A549 (cell line): ENCODE measurements at regions of chr17 and their contacts with region 1.

Region 1: DNA sequence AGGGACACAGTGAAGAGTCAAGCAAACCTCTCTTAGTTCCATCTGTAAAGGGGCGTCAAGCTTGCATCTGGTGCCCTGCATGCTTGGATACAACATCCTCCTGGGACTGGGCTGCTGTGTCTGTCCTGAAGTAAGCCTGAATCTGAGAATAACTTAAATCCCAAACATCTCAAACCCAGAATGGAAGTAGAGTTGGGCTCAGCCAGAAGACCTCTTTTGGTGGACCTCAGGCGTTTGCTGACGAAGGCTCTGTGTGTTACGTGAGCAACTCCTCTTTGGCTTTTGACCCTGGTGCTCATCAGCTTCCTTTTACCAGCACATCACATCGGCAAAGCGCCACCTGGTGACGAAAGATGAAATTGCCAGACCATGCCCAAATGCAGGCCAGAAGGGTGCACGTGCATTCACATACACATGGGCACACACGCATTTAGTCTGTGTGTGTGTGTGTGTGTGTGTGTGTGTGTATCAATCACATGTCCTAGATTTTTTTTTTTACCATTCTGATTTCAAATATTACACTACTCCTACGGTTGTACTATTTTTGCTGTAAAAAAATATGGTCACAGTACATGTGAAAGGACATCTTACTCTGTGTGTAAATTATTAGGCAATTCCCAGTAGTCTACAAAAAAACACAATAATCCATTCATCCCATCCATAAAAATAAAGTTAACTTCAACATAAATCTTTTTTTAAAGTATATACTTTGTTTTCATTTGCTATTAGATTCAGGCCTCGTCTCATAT is 41.1 kb upstream of the FOXJ1 start:
- DNase-seq: peak; percentile 96 to 97
- ATAC-seq: peak; percentile 94 to 97
- H3K4me3 ChIP-seq: no peak overlapping the region
- H3K27ac ChIP-seq: peak overlapping the region in 1 of 2 experiments; percentile 29; a peak in 1 of 6 replicates
- H3K4me1 ChIP-seq: no peaks in the 10 kb centered on the region
- CTCF ChIP-seq: peak; percentile 93
- EP300 ChIP-seq: no peak
- POLR2A ChIP-seq: no peak
- RAD21 ChIP-seq: peak; percentile 74

Region 2: DNA sequence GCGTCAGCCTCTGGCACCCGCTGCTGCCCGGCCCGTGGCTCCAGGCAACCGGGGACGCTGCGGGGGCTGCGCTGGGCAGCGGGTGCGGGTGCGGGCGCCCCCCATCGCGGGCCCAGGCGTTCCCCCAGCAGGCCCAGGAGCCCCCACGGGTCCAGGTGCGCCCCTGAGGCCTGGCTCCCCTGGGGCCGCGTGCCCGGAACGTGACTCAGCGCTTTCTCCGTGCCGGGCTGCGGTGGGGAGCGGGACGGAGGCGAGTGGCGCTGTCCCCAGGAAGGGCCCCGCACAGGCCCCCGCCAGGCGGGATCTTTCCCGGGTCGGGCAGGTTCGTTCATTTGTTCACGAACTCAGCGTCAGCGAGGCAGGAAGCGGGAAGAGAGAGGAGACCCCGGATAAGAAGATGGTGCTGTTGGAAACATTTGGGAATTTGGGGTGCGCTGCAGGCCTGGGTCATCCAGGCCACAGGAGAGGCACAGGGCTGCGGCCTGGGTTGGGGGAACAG is 60.2 kb before region 1 on chr17:
- CTCF ChIA-PET with region 1: interaction called, 206 read pairs
- POLR2A ChIA-PET with region 1: interaction called, 3 read pairs
- DNase-seq: no peak
- ATAC-seq: peak in 1 of 2 experiments; percentile 3; a peak in 2 of 6 replicates
- H3K4me3 ChIP-seq: peak overlapping the region; percentile 2; the same call in 1 of the 3 replicates
- H3K27ac ChIP-seq: peak overlapping the region; percentile 68 to 90
- H3K4me1 ChIP-seq: peaks cover 5% of the 10 kb centered on the region
- CTCF ChIP-seq: no peak
- EP300 ChIP-seq: no peak
- POLR2A ChIP-seq: no peak
- RAD21 ChIP-seq: no peak

Region 3: GRCh38 chr17:76153640-76154039 is 28.6 kb before region 1 on chr17:
- CTCF ChIA-PET with region 1: interaction called, 41 read pairs
- POLR2A ChIA-PET with region 1: no interaction called
- DNase-seq: no peak
- ATAC-seq: peak in 1 of 2 experiments; percentile 48; a peak in 3 of 6 replicates
- H3K4me3 ChIP-seq: no peak overlapping the region
- H3K27ac ChIP-seq: no peak overlapping the region
- H3K4me1 ChIP-seq: 0 out of 3 replicates have a peak, but pooled peaks cover 2% of the 10 kb centered on the region
- CTCF ChIP-seq: no peak
- EP300 ChIP-seq: no peak
- POLR2A ChIP-seq: no peak
- RAD21 ChIP-seq: no peak

Region 4: DNA sequence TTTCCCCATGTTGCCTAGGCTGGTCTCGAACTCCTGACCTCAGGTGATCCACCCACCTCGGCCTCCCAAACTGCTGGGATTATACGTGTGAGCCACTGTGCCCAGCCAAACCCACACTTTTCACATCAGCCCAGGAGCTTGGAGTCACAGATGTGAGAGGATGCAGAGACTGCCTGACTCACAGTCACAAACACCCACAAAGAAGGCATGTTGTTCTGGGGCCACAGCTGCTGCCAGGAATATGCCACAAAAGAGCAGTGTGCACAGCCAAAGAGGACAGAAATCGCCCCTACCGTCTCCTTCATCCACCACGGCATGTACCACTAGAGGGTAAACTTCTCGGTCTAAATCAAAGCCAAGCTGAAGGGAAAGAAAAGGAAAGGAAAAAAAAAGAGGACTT is 16.0 kb before region 1 on chr17:
- CTCF ChIA-PET with region 1: interaction called, 90 read pairs
- POLR2A ChIA-PET with region 1: no interaction called
- DNase-seq: no peak
- ATAC-seq: no peak
- H3K4me3 ChIP-seq: no peak overlapping the region
- H3K27ac ChIP-seq: no peak overlapping the region
- H3K4me1 ChIP-seq: no peaks in the 10 kb centered on the region
- CTCF ChIP-seq: no peak
- EP300 ChIP-seq: no peak
- POLR2A ChIP-seq: no peak
- RAD21 ChIP-seq: no peak

Region 5: DNA sequence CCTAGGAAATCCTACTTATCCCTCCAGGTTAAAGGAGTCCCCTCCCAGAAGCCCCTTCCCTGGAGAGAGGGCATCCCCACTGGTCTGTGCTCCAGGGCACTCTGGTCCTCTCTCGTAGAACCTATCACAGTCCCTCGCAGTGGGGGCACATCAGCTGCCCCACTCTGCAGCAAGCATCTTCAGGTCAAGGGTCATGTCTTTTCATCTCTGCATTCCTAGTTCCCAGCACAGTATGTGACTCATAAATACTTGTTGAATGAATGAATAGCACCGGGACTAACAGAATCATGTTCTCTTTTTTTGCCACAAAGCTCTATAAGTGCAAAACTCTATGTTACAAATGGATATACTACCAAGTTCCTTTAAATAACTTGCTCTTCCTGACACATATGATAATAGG is 22.1 kb after region 1 on chr17:
- CTCF ChIA-PET with region 1: interaction called, 16 read pairs
- POLR2A ChIA-PET with region 1: no interaction called
- DNase-seq: peak; percentile 36 to 75
- ATAC-seq: peak; percentile 91
- H3K4me3 ChIP-seq: no peak overlapping the region
- H3K27ac ChIP-seq: peak overlapping the region; percentile 3 to 72; a peak in 3 of 6 replicates
- H3K4me1 ChIP-seq: peaks cover 17% of the 10 kb centered on the region
- CTCF ChIP-seq: no peak
- EP300 ChIP-seq: no peak
- POLR2A ChIP-seq: no peak
- RAD21 ChIP-seq: no peak

Region 6: DNA sequence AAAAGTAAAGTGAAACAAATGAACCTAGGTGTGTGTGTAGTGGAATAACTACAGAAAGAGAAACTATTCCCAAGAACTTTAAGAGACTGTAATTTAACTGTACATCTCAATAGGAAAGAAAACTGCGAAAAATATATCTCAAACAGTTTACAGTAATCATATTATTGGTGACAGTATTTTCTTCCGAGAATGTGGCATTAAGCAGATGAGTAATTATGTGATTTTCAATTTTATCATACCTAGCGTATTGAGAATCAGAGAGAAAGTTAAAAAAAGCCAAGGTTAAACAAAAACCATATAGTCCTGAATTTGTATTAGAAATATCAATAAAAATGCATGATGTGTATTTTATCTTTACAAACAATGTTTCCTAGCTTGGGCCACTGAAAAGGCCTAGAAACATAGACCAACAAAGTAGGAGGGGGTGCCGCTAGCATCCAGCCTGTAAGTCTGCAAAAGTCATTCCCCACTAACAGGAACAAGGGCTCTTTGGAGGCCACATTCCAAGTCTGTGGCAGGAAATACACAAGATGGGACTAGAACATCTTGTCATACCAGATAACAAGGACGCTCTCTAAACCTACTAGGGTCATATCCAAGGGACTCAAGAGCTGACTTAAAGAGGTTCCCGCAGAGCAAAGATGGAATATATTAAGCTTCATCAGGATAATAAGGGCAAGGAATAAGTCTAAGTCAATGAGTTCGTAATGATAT is 37.6 kb after region 1 on chr17:
- CTCF ChIA-PET with region 1: interaction called, 11 read pairs
- POLR2A ChIA-PET with region 1: no interaction called
- DNase-seq: no peak
- ATAC-seq: no peak
- H3K4me3 ChIP-seq: no peak overlapping the region
- H3K27ac ChIP-seq: no peak overlapping the region
- H3K4me1 ChIP-seq: peaks cover 8% of the 10 kb centered on the region; the same call in 2 of the 3 replicates
- CTCF ChIP-seq: no peak
- EP300 ChIP-seq: no peak
- POLR2A ChIP-seq: no peak
- RAD21 ChIP-seq: no peak

Region 7: GRCh38 chr17:76264755-76265596 is 82.8 kb after region 1 on chr17 and contains the start of gene UBALD2:
- CTCF ChIA-PET with region 1: interaction called, 18 read pairs
- POLR2A ChIA-PET with region 1: interaction called, 3 read pairs
- DNase-seq: peak; percentile 100
- ATAC-seq: peak; percentile 92 to 98
- H3K4me3 ChIP-seq: peak within 1 kb of the TSS; percentile 99
- H3K27ac ChIP-seq: peak within 1 kb of the TSS; percentile 89 to 92
- H3K4me1 ChIP-seq: peaks cover 25% of the 10 kb centered on the region
- CTCF ChIP-seq: no peak
- EP300 ChIP-seq: no peak
- POLR2A ChIP-seq: peak; percentile 21; the same call in 1 of the 2 replicates
- RAD21 ChIP-seq: no peak
- polyA plus RNA-seq, gene UBALD2: 13.8 and 21.5 TPM in 2 replicates

Region 8: DNA sequence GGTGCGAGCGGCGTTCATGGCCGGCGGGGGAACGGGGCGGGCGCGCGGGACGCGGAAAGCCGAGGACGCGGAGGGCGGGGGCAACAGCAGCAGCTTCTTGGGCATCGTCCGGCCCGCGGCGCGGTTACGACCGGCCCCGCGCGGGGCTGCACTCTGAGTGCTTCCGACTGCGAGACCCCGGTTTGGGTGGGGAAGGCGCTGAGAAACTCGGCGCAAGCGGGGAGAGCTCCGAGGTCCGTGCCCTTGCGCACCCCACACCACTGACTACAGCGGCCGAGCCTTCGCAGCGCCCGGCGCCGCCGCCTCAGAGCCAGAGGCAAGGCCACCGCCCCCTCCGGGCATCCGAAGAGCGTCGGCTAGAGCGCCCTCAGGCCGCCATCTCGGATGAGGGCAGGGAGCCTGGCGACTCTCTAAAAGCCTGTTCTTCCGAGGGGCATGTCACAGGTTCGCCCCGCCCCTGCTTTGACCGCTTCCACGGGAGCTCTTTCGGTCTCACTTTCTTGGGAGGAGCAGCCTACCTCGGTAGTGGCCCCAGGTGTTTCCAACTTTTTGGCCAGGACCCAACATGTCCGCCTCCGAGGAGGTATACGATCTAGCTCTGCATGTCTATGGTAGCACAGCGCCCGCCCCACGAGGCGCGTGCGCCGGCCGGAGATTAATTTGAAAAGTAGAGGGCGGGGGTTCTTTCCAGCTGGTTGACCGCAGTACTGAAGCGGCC is 171.6 kb after region 1 on chr17 and contains the start of gene PRPSAP1:
- CTCF ChIA-PET with region 1: no interaction called
- POLR2A ChIA-PET with region 1: no interaction called
- DNase-seq: peak; percentile 95 to 98
- ATAC-seq: peak; percentile 97 to 98
- H3K4me3 ChIP-seq: peak within 1 kb of the TSS; percentile 83
- H3K27ac ChIP-seq: peak within 1 kb of the TSS; percentile 93 to 97
- H3K4me1 ChIP-seq: peaks cover 18% of the 10 kb centered on the region; the same call in 2 of the 3 replicates
- CTCF ChIP-seq: no peak
- EP300 ChIP-seq: no peak; a peak in 1 of 5 replicates
- POLR2A ChIP-seq: peak; percentile 98
- RAD21 ChIP-seq: no peak
- polyA plus RNA-seq, gene PRPSAP1: 80.9 and 92.1 TPM in 2 replicates